PC-3 (cell line): ENCODE measurements at regions of chr2 and their contacts with region 1.

Region 1: GRCh38 chr2:113776949-113777348 is 20.5 kb upstream of the SLC35F5 start:
- DNase-seq: no peak
- ATAC-seq: no peak
- H3K4me3 ChIP-seq: no peak overlapping the region
- H3K27ac ChIP-seq: no peak overlapping the region
- H3K4me1 ChIP-seq: no peaks in the 10 kb centered on the region
- H3K27me3 ChIP-seq: no peaks in the 10 kb centered on the region
- CTCF ChIP-seq: no peak

Region 2: GRCh38 chr2:114468343-114468742 is 691.4 kb after region 1 on chr2:
- CTCF ChIA-PET with region 1: no interaction called
- POLR2A ChIA-PET with region 1: interaction called, 12 read pairs
- intact Hi-C with region 1: no loop called
- DNase-seq: no peak
- ATAC-seq: no peak
- H3K4me3 ChIP-seq: no peak overlapping the region
- H3K27ac ChIP-seq: no peak overlapping the region
- H3K4me1 ChIP-seq: no peaks in the 10 kb centered on the region
- H3K27me3 ChIP-seq: peaks cover 1% of the 10 kb centered on the region; the same call in 1 of the 2 replicates
- CTCF ChIP-seq: no peak